ENCODE measurements at regions of chr7 and their contacts with region 1.

Region 1: GRCh38 chr7:127514499-127514898 is 70.9 kb downstream of the GCC1 start:
- DNase-seq: no peak

Region 2: DNA sequence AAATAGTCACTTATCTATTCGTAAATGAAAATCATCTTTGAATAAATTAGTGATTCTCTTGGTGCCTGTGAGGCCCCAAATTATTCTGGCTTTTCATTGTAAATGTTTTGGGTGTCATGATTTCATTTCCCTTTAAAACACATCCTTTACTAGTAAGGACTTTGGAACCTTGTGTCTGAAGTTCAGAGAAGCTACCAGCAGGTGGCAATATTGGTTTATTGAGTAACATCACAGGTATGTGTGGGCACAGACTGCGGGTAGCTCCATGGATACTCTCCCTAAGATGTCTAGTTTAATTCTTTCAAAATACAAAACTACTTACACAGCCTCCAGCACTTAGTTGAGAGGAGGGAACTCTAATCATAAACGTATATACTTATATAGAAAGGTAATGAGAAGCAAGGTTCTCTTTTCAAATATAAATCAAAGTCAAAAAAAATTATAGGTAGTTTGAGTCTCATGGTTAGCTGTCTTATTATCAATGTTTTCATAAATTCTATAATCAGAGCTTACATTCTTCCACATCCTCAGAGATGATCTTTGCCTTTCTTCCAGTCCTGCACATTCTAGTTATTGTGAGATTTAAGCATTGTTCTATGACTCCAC is 711.3 kb before region 1 on chr7:
- intact Hi-C with region 1: loop called (anchors 5 kb)
- DNase-seq: no peak

Measured in cardiac septum (tissue), 1 donor.